CD8-positive, alpha-beta memory T cell (primary cell): ENCODE measurements at regions of chr2 and their contacts with region 1.

Region 1: DNA sequence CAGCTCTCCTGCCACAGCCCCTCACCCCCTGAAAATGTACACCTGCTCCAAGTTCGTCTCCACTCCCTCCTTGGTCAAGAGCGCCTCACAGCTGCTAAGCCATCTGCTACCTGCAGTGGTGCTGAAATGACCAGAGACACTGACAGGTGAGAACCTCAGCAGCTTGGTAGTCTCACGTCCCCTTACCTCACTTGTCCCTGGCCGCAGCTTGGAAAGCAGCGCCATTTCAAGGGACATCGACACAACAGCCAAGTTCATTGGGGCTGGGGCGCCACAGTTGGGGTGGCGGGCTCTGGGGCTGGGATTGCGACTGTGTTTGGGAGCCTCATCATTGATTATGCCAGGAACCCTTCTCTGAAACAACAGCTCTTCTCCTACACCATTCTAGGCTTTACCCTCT is 47.5 kb downstream of the ANKRD44 start:
- DNase-seq: no peak
- H3K4me3 ChIP-seq: no peak overlapping the region
- H3K4me3 Mint-ChIP-seq: peak overlapping the region; percentile 6 to 82 (median 69)
- H3K27ac ChIP-seq: no peak overlapping the region
- H3K27ac Mint-ChIP-seq: peak overlapping the region; percentile 84 to 97 (median 92)
- H3K4me1 ChIP-seq: peaks cover 84% of the 10 kb centered on the region
- H3K4me1 Mint-ChIP-seq: peaks cover 84 to 92% (median 88%) of the 10 kb centered on the region in 3 donors
- H3K27me3 ChIP-seq: no peaks in the 10 kb centered on the region
- H3K27me3 Mint-ChIP-seq: no peaks in the 10 kb centered on the region

Region 2: DNA sequence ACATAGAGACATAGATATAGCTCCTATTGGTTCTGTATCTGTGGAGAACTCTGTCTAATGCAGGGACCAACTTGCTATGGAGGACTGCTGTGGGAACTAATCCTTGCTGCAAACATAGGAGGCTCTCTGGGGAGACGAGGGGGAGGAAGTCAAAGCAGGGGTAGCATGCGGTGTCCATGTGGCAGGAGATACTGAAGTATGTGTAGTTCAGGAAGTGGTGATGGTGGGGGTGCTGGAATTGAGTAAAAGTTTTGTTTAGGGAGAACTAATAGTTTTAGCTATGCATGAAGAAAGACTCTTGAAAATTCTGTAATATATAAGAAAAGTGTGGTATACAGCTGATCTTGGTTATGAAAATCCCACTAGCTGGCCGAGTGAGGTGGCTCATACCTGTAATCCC is 14.5 kb before region 1 on chr2:
- CTCF ChIA-PET with region 1: interaction called, 4 read pairs
- POLR2A ChIA-PET with region 1: interaction called, 13 read pairs
- DNase-seq: peak in 2 of 5 donors; percentile 52 to 60
- H3K4me3 ChIP-seq: no peak overlapping the region
- H3K4me3 Mint-ChIP-seq: peak overlapping the region; percentile 19 to 80 (median 71)
- H3K27ac ChIP-seq: no peak overlapping the region
- H3K27ac Mint-ChIP-seq: peak overlapping the region; percentile 77 to 95 (median 87)
- H3K4me1 ChIP-seq: peaks cover 81% of the 10 kb centered on the region
- H3K4me1 Mint-ChIP-seq: peaks cover 73 to 95% (median 94%) of the 10 kb centered on the region in 3 donors
- H3K27me3 ChIP-seq: no peaks in the 10 kb centered on the region
- H3K27me3 Mint-ChIP-seq: peaks cover 0 to 2% of the 10 kb centered on the region in 2 donors

Region 3: GRCh38 chr2:197799068-197799467 is 536.0 kb after region 1 on chr2:
- CTCF ChIA-PET with region 1: no interaction called
- POLR2A ChIA-PET with region 1: no interaction called
- DNase-seq: no peak
- H3K4me3 ChIP-seq: no peak overlapping the region
- H3K4me3 Mint-ChIP-seq: no peak overlapping the region
- H3K27ac ChIP-seq: no peak overlapping the region
- H3K27ac Mint-ChIP-seq: no peak overlapping the region
- H3K4me1 ChIP-seq: peaks cover 9% of the 10 kb centered on the region
- H3K4me1 Mint-ChIP-seq: peaks cover 8 to 10% (median 9%) of the 10 kb centered on the region in 3 donors
- H3K27me3 ChIP-seq: peaks cover 6% of the 10 kb centered on the region
- H3K27me3 Mint-ChIP-seq: peaks cover 12 to 64% of the 10 kb centered on the region in 2 donors